ENCODE measurements at regions of chr16 and their contacts with region 1.

Region 1: GRCh38 chr16:85821441-85822135 is 22.1 kb downstream of the COX4I1 start:
- DNase-seq: peak; percentile 92
- CTCF ChIP-seq: peak; percentile 94

Region 2: GRCh38 chr16:85479972-85480751 is 341.4 kb before region 1 on chr16:
- CTCF ChIA-PET with region 1: no interaction called
- POLR2A ChIA-PET with region 1: no interaction called
- DNase-seq: peak; percentile 86
- CTCF ChIP-seq: peak; percentile 37

Region 3: GRCh38 chr16:85838381-85838780 is 16.8 kb after region 1 on chr16:
- CTCF ChIA-PET with region 1: interaction called, 43 read pairs
- POLR2A ChIA-PET with region 1: no interaction called
- DNase-seq: no peak
- CTCF ChIP-seq: no peak

Region 4: GRCh38 chr16:85898521-85899442 is 77.2 kb after region 1 on chr16 and contains the start of gene IRF8:
- CTCF ChIA-PET with region 1: interaction called, 90 read pairs
- POLR2A ChIA-PET with region 1: interaction called, 7 read pairs
- DNase-seq: peak; percentile 93
- CTCF ChIP-seq: no peak

Region 5: DNA sequence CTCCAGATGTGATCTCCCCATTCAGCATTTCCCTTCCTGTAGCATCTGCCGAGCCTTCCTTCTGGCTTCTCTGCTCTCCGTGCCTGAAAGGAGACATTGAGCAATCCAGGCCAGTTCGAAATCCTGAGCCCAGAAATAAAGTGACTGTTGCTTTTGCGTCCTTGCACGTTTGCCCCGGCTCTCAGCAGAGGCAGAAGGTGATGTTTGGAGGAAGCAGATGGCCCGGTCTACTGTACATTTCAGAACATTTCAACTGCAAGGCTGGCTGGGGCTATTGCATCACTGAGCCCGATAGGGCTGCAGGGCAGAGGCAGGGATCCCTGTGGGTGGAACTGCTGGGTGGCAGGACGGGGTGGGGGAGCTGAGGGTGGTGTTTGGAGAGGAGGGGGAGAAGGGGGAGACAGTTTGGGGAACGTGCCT is 106.8 kb after region 1 on chr16:
- CTCF ChIA-PET with region 1: interaction called, 18 read pairs
- POLR2A ChIA-PET with region 1: no interaction called
- DNase-seq: no peak
- CTCF ChIP-seq: no peak

Region 6: DNA sequence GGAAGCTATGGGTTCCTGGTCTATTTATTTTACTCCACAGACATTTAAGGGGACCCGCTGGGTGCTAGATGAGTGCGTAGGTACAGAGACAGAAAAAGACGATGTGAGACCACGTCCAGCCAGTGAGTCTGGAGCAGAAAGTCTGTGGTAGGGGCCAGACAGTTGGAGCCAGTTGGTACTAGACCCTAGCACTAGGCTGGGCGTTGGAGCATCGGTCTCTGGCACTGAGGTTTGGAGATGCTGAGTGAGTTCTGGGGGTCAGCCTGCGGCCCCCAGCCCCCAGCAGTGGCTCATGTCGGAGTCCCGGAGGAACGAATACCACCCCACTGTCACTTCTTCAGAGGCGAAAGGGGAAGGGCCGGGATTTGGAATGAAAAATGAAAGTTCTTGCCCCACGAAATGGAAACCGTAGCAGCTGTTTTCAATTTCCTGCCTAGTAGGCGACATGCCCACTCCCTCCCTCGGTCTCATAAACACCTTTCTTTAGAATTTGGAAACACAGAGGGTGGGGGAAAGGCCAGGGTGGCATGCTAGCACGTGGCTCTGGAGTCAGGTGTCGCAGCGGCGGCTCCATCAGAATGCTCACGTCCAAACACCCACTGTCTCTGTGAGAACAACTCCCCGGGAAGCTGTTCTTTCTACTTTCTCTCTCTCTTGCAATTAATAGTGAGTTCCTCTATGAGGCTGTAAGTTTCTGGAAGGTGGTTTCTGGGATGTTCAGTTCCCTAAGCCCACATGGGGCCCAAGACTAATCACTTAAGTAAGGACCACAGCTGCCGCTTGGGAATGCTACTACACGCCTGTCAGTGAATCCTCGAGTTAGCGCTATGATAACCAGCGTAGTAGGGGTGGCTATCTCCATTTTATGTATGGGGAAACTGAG is 174.2 kb after region 1 on chr16:
- CTCF ChIA-PET with region 1: interaction called, 162 read pairs
- POLR2A ChIA-PET with region 1: no interaction called
- DNase-seq: peak; percentile 49
- CTCF ChIP-seq: no peak

Region 7: DNA sequence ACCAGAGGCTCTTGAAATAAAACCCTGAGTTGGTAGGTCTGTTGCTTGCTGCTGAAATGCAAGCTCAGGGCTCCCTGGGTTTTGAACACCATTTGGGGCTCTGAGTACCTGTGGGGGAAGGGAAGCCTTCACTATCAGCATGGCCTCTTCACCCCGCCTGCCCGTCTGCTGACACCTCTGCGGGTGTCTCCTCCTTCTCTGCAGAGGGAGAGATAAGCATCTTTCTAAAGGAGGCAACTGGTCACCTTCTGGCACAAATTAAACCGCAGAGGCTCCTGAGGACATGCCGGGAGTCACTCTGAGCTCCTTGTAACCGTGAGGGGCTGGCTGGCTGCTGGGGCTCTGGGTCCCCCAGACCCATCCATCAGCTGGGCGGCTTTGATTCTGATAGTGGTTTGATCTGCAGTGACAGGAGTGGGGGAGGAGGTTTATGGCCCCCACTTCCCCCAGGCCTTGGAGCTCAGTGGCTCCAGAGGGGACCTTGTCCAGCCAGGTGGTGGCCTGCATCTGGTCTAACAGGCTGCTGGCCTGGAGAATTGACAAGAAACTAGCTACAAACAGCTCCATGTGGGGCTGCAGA is 200.9 kb after region 1 on chr16:
- CTCF ChIA-PET with region 1: interaction called, 255 read pairs
- POLR2A ChIA-PET with region 1: no interaction called
- DNase-seq: no peak
- CTCF ChIP-seq: no peak

Region 8: GRCh38 chr16:86199871-86200695 is 378.5 kb after region 1 on chr16:
- CTCF ChIA-PET with region 1: no interaction called
- POLR2A ChIA-PET with region 1: no interaction called
- DNase-seq: no peak
- CTCF ChIP-seq: no peak